K562 (cell line): ENCODE measurements at regions of chr17 and their contacts with region 1.

Region 1: DNA sequence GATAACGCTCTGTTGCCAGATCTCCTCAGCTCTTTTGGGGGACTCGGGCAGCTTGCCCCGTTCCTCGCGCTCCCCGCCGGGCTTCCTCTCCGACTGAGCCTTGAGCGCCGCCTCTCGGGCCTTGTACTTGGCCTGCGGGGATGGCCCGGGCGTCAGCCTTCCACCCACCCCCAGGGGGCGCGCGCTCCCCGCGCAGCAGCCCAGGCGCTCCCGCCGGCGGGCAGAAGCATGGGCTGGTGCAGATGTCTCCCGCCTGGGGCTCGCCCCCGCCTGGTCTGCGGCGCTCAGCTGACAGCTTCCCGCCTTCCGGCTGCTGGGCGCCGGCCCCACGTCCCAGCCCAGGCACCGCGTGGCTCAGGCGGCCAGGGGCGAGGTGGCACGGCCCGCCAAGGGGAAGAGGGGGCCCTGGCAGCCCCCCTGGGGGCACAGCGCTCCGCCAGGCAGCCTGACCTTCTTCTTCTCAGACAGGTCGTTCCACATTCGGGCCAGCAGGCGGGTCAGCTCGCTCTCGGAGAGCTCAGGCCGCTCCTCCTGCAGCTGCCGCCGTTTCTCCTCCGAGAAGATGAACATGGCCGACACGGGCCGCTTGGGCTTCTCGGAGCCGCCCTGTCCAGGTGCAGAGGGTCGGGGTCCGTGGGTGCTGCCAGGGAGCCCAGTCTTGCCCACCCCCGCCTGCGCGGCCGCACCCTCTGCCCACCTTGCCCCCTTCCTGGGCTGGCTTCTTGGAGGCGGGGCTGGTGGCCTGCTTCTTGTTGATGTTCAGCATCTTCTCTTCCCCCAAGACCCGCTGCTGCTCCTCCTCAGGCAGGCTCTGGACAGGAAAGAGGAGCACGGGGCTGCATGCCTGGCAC is 8.9 kb downstream of the UBTF start:
- DNase-seq: peak; percentile 82 to 94 (median 88)
- ATAC-seq: peak; percentile 94
- H3K4me3 ChIP-seq: no peak overlapping the region
- H3K27ac ChIP-seq: peak overlapping the region; percentile 61; the same call in 1 of the 3 replicates
- H3K4me1 ChIP-seq: peaks cover 12 to 51% of the 10 kb centered on the region in 2 experiments; a peak in 4 of 5 replicates
- H3K27me3 ChIP-seq: no peaks in the 10 kb centered on the region
- CTCF ChIP-seq: peak; percentile 99 to 100 (median 99)
- EP300 ChIP-seq: peak; percentile 28; the same call in 1 of the 2 replicates
- POLR2A ChIP-seq: peak; percentile 13; the same call in 1 of the 2 replicates
- RAD21 ChIP-seq: peak; percentile 99

Region 2: DNA sequence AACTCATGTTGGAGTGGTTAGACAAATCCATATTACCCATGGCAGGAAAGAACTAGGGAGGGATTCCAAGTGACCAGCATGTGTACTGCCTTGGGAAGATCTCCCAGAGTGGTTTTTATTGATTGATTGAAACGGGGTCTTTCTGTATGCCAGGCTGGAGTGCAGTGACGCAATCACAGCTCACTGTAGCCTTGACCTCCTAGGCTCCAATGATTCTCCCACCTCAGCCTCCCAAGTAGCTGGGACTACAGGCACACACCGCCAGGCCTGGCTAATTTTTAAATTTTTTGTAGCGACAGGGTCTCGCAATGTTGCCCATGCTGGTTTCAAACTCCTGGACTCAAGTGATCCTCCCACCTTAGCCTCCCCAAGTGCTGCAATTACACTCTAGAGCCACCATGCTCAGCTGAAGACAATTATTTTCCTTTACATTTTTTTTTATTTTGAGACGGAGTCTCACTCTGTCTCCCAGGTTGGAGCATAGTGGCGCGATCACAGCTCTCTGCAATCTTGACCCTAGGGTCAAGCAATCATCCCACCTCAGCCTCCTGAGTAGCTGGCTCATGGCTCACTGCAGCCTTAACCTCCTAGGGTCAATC is 26.3 kb before region 1 on chr17:
- CTCF ChIA-PET with region 1: no interaction called
- POLR2A ChIA-PET with region 1: no interaction called
- in situ Hi-C with region 1: no loop called
- intact Hi-C with region 1: no loop called
- DNase-seq: no peak
- ATAC-seq: no peak
- H3K4me3 ChIP-seq: no peak overlapping the region
- H3K27ac ChIP-seq: no peak overlapping the region
- H3K4me1 ChIP-seq: peaks cover 13 to 23% of the 10 kb centered on the region in 2 experiments
- H3K27me3 ChIP-seq: no peaks in the 10 kb centered on the region
- CTCF ChIP-seq: no peak
- EP300 ChIP-seq: no peak
- POLR2A ChIP-seq: no peak
- RAD21 ChIP-seq: no peak

Region 3: DNA sequence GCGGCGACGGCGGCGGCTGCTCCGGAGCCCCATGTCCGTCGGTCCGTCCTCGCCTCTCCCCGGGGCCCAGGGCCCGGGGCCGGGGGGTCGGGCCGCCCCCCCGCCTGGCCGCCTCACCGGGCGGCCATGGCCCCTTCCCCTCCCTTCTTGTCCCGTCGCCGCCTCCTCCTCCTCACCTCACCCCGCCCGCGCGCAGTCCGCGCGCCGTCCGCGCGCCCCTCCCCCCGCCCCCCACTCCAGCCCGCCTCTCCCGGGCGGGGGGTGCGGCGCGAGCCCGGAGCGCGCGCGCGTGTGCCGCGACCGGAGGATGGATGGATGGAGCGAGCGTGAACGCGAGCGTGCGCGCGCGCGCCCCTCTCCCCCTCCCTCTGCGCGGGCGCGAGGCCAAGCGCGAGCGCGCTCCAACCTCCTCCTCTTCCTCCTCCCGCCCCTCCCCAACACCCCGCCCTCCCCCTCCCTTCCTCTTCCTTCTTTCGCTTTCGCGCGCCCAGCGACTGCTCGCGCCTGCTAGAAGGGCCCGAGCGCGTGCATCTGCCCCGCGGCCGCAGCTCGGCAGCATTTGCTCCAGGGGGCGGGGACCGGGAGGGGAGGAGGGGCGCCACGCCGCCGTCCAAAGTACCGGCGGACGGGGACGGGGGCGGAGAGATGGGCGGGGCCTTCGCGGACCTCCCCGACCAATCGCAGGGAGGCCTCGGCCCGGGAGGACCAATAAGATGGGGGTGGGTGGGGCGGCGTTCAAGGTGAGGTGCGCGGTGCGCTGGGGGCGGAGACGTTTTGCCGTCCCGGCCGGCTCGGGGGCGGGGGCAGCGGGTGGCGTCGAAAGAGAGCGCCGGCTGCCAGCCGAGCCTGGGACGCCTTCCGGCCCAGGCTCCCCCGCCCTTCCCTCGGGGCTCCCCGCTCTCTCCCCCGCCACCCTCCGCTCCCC is 10.8 kb before region 1 on chr17 and contains the start of gene ATXN7L3:
- CTCF ChIA-PET with region 1: interaction called, 3 read pairs
- POLR2A ChIA-PET with region 1: interaction called, 11 read pairs
- in situ Hi-C with region 1: no loop called
- intact Hi-C with region 1: no loop called
- DNase-seq: peak; percentile 94 to 100 (median 96)
- ATAC-seq: peak; percentile 90
- H3K4me3 ChIP-seq: peak within 1 kb of the TSS; percentile 79
- H3K27ac ChIP-seq: peak within 1 kb of the TSS; percentile 91
- H3K4me1 ChIP-seq: peaks cover 36 to 40% of the 10 kb centered on the region in 2 experiments
- H3K27me3 ChIP-seq: no peaks in the 10 kb centered on the region
- CTCF ChIP-seq: no peak
- EP300 ChIP-seq: no peak
- POLR2A ChIP-seq: no peak
- RAD21 ChIP-seq: no peak
- polyA plus RNA-seq, gene ATXN7L3: 0.62 to 0.90 TPM

Region 4: GRCh38 chr17:44324571-44325275 is 114.2 kb after region 1 on chr17 and contains the start of gene SLC25A39:
- CTCF ChIA-PET with region 1: interaction called, 16 read pairs
- POLR2A ChIA-PET with region 1: interaction called, 5 read pairs
- in situ Hi-C with region 1: loop called (anchors 5 kb)
- intact Hi-C with region 1: no loop called
- DNase-seq: peak; percentile 93 to 97 (median 94)
- ATAC-seq: peak; percentile 85
- H3K4me3 ChIP-seq: peak within 1 kb of the TSS; percentile 85
- H3K27ac ChIP-seq: peak within 1 kb of the TSS; percentile 83
- H3K4me1 ChIP-seq: peaks cover 9 to 72% of the 10 kb centered on the region in 2 experiments; a peak in 4 of 5 replicates
- H3K27me3 ChIP-seq: no peaks in the 10 kb centered on the region
- CTCF ChIP-seq: no peak
- EP300 ChIP-seq: no peak
- POLR2A ChIP-seq: peak; percentile 66; the same call in 1 of the 2 replicates
- RAD21 ChIP-seq: no peak; a peak in 1 of 4 replicates
- polyA plus RNA-seq, gene SLC25A39: 4.8 to 6.3 TPM

Region 5: GRCh38 chr17:44344939-44345453 is 134.4 kb after region 1 on chr17 and contains the start of gene GRN:
- CTCF ChIA-PET with region 1: interaction called, 42 read pairs
- POLR2A ChIA-PET with region 1: interaction called, 6 read pairs
- in situ Hi-C with region 1: no loop called
- intact Hi-C with region 1: loop called (anchors 1 kb)
- DNase-seq: peak; percentile 96 to 99 (median 99)
- ATAC-seq: peak; percentile 100
- H3K4me3 ChIP-seq: peak within 1 kb of the TSS; percentile 65
- H3K27ac ChIP-seq: peak within 1 kb of the TSS; percentile 44
- H3K4me1 ChIP-seq: peaks cover 14 to 33% of the 10 kb centered on the region in 2 experiments; a peak in 3 of 5 replicates
- H3K27me3 ChIP-seq: no peaks in the 10 kb centered on the region; a peak in 1 of 5 replicates
- CTCF ChIP-seq: no peak
- EP300 ChIP-seq: 0 out of 2 replicates have a peak, but pooled peaks have one; percentile 28
- POLR2A ChIP-seq: peak; percentile 78
- RAD21 ChIP-seq: no peak
- polyA plus RNA-seq, gene GRN: 5.4 to 5.9 TPM

Region 6: GRCh38 chr17:44522883-44523671 is 312.5 kb after region 1 on chr17:
- CTCF ChIA-PET with region 1: interaction called, 15 read pairs
- POLR2A ChIA-PET with region 1: no interaction called
- in situ Hi-C with region 1: no loop called
- intact Hi-C with region 1: loop called (anchors 2 kb)
- DNase-seq: peak; percentile 60 to 82 (median 72)
- ATAC-seq: peak; percentile 100
- H3K4me3 ChIP-seq: no peak overlapping the region
- H3K27ac ChIP-seq: no peak overlapping the region
- H3K4me1 ChIP-seq: peaks cover 2 to 3% of the 10 kb centered on the region in 2 experiments; a peak in 3 of 5 replicates
- H3K27me3 ChIP-seq: no peaks in the 10 kb centered on the region
- CTCF ChIP-seq: peak; percentile 86 to 89 (median 89)
- EP300 ChIP-seq: no peak
- POLR2A ChIP-seq: no peak
- RAD21 ChIP-seq: peak; percentile 73 to 89

Region 7: DNA sequence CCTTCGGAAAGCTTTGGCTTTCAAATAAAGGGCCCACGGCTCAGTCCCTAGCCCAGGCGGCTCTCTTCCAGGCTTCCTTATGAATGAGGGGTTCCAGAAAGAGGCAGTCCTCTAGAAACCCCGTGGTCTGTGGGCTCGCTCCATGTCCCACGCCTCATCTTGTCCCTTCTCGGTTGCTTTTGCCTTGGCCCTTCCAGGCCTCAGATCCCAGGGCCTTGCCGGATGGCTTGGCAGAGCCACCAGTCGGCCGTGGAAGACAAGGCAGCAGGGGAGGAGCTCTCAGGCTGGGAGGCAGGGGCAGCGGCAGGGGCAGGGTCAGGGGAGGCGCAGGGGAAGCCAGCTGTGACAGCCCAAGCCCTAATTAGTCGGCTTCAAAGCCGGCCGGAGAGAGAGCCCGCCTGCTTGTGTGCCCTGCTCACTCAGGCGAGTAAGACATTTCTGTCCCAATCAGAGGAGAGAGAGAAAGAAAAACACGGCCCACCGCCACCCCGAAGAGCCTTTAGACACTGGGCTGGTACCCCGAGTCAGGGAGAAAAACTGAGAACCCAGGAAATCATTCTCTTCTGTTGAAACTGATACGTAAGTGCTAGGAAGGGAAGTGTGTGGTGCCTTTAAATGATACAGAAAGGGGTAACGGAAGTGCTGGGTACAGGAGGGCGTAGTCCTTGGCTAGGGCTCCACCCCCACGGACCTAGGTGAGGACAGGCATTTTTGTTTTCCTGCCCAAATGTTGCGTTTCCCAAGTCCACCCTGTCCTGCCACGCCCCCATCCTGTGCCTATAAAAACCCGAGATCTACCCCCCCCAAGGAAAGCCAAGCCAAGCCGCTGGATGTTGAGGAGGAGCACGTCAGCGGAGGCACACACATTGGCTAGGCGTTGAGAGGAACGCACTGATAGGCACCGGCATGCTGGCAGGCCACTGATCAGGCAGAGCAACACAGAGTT is 417.9 kb after region 1 on chr17:
- CTCF ChIA-PET with region 1: no interaction called
- POLR2A ChIA-PET with region 1: no interaction called
- in situ Hi-C with region 1: no loop called
- intact Hi-C with region 1: no loop called
- DNase-seq: peak in 1 of 4 experiments; percentile 8
- ATAC-seq: no peak; the same call in 2 of the 3 replicates
- H3K4me3 ChIP-seq: no peak overlapping the region
- H3K27ac ChIP-seq: no peak overlapping the region
- H3K4me1 ChIP-seq: peaks cover 0 to 7% of the 10 kb centered on the region in 2 experiments; a peak in 2 of 5 replicates
- H3K27me3 ChIP-seq: peaks cover 6 to 10% of the 10 kb centered on the region in 2 experiments; a peak in 2 of 5 replicates
- CTCF ChIP-seq: no peak
- EP300 ChIP-seq: no peak
- POLR2A ChIP-seq: no peak
- RAD21 ChIP-seq: no peak